ENCODE measurements at regions of chr1 and their contacts with region 1.

Region 1: DNA sequence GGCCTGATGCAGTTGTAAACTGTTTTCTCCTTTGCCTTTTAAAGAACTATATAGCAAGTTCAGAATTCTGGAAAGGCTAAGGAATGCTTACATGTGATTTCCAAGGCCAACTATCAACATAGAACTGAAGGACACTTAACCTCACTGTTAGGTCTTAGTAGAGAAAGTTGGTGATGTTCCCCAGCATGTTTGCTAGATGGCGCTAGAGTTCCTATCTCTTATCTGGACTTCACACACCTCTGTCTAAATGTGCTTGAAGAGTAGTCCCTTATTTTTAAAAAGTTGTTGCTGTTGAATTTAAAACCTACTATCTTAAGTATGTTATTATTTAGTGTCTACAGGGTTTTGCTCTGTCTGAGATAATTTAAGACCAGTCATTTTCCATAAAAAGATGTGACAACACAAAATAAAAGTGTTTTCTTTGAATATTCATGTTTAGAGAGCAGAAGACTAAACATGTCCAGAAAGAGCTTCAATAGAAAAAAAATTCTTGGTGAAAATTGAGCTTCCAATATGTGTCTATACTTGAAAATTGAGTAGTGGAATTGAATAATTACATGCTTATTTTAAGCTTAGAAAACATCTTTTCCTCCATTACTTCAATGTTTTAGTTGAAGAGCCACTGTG is 237.3 kb downstream of the S1PR1 start:
- DNase-seq: peak; percentile 34
- H3K4me3 ChIP-seq: no peak overlapping the region
- H3K27ac ChIP-seq: no peak overlapping the region
- H3K4me1 ChIP-seq: no peaks in the 10 kb centered on the region
- H3K27me3 ChIP-seq: peaks cover 4% of the 10 kb centered on the region
- CTCF ChIP-seq: peak; percentile 81 to 89

Region 2: DNA sequence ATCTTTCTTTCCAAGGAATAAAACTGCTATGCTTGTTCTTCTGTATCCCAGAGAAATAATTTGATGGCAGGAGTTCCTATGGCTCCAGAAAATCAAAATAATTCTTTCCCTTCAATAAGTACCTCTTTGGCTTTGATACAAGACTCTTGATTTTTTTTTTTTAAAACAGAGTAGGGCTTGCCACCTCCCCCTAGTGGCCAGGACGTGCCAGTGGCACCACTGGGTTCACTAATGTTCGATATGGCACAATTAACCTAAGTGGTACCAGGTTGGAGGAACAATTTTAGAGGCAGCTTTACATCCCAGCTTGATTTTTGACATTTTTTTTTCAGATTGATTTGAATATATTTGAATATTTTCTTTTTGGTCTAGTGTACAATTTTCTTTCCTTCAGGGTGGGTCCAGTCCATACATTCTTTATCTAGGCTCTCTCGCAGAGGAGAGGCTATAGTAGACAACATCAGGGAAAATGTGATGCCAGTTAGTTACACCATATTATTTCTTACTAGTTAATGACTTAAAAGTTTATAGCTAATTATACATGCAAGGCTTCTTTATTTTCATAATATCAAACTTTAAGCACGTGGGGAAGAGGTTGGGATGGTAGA is 93.5 kb after region 1 on chr1:
- CTCF ChIA-PET with region 1: no interaction called
- dilution Hi-C with region 1: no loop called
- in situ Hi-C with region 1: no loop called
- intact Hi-C with region 1: loop called (anchors 1 kb)
- DNase-seq: peak; percentile 20
- H3K4me3 ChIP-seq: no peak overlapping the region
- H3K27ac ChIP-seq: no peak overlapping the region
- H3K4me1 ChIP-seq: no peaks in the 10 kb centered on the region
- H3K27me3 ChIP-seq: peaks cover 2% of the 10 kb centered on the region
- CTCF ChIP-seq: peak; percentile 94 to 96

Region 3: DNA sequence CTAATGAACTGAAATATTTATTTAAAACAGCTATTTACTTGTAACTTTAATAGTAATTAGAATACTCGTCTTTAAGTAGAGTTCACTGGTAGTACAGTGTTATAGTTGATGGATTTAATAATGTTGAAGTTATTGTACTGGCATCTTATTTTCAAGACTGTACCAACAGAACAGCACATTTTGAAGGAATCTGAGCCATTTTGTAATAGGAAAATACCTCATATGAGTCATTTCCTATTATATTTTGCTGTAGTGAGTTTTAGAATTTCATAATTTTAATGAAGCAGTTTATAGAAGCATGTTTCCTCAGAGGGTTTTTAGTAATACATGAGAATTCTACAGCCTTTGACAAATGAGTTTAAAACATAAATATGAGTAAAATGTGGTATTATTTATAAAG is 264.3 kb after region 1 on chr1:
- CTCF ChIA-PET with region 1: no interaction called
- dilution Hi-C with region 1: no loop called
- in situ Hi-C with region 1: no loop called
- intact Hi-C with region 1: no loop called
- DNase-seq: peak; percentile 62
- H3K4me3 ChIP-seq: no peak overlapping the region
- H3K27ac ChIP-seq: no peak overlapping the region
- H3K4me1 ChIP-seq: peaks cover 38% of the 10 kb centered on the region
- H3K27me3 ChIP-seq: no peaks in the 10 kb centered on the region
- CTCF ChIP-seq: no peak

Measured in mammary epithelial cell (primary cell).